Activated B cell treated with CpG ODN at 0.5 μM for 24 hours (primary cell): ENCODE measurements at regions of chr2 and their contacts with region 1.

Region 1: DNA sequence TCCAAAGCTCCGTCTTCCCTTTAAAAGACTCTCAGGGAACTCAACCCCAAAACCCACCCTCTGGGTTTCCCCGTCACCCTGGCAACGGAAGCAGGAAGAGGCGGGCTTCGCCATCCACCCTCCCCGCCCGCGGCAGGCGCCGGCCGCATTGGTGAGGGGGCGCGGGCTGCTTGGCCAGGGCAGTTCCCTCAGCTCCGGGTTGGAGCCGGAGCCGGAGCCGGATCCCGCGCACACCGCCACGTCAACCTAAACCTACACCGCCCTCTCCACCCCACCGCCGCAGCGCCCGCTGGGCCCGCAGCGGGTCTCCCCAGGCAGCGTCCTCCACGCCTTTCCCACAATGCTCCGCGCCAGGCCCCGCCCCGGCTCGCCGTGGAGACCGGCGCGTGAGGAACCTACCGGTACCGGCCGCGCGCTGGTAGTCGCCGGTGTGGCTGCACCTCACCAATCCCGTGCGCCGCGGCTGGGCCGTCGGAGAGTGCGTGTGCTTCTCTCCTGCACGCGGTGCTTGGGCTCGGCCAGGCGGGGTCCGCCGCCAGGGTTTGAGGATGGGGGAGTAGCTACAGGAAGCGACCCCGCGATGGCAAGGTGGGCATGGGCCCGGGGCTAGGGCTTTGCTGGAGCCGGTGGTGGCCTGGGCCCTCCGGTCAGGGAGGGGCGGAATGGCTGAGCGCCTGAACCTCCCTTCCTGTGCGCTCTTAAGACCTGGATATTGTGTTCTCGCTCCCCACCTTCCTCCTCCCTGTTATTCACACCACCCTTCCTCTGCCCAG is at the start of gene DNAJC10:
- DNase-seq: peak; percentile 94
- ATAC-seq: peak; percentile 78
- H3K4me3 Mint-ChIP-seq: no peak within 1 kb of the TSS
- H3K27ac Mint-ChIP-seq: no peak within 1 kb of the TSS
- H3K4me1 Mint-ChIP-seq: peaks cover 12% of the 10 kb centered on the region
- H3K27me3 Mint-ChIP-seq: no peaks in the 10 kb centered on the region
- CTCF ChIP-seq: no peak
- total RNA-seq, gene DNAJC10: 119 and 132 TPM in 2 replicates

Region 2: GRCh38 chr2:181991171-181991885 is 724.8 kb before region 1 on chr2:
- CTCF ChIA-PET with region 1: no interaction called
- POLR2A ChIA-PET with region 1: no interaction called
- intact Hi-C with region 1: loop called (anchors 5 kb)
- DNase-seq: no peak
- ATAC-seq: peak; percentile 91
- H3K4me3 Mint-ChIP-seq: peak overlapping the region; percentile 35
- H3K27ac Mint-ChIP-seq: peak overlapping the region; percentile 75
- H3K4me1 Mint-ChIP-seq: peaks cover 34% of the 10 kb centered on the region
- H3K27me3 Mint-ChIP-seq: no peaks in the 10 kb centered on the region
- CTCF ChIP-seq: no peak

Region 3: DNA sequence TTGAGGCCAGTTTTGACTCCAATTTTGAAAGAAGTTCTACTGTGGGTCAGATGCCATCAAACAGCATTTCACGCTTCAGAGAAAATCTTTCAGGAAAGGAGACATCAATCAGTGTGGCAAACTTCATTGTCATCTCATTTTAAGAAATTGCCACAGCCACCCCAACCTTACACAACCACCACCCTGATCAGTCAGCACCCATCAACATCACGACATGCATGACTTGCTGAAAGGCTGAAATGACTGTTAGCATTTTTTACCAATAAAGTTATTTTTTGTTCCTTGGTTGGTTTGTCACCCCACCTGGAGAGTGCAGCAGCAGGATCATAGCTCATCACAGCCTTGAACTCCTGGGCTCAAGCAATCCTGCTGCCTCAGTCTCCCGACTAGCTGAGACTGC is 10.4 kb after region 1 on chr2:
- CTCF ChIA-PET with region 1: no interaction called
- POLR2A ChIA-PET with region 1: interaction called, 12 read pairs
- intact Hi-C with region 1: loop called (anchors 1 kb)
- DNase-seq: no peak
- ATAC-seq: peak; percentile 18
- H3K4me3 Mint-ChIP-seq: no peak overlapping the region
- H3K27ac Mint-ChIP-seq: no peak overlapping the region
- H3K4me1 Mint-ChIP-seq: peaks cover 19% of the 10 kb centered on the region
- H3K27me3 Mint-ChIP-seq: no peaks in the 10 kb centered on the region
- CTCF ChIP-seq: no peak

Region 4: GRCh38 chr2:183078465-183079138 is 362.5 kb after region 1 on chr2 and contains the start of gene DUSP19:
- CTCF ChIA-PET with region 1: no interaction called
- POLR2A ChIA-PET with region 1: interaction called, 4 read pairs
- intact Hi-C with region 1: loop called (anchors 5 kb)
- DNase-seq: peak; percentile 61
- ATAC-seq: peak; percentile 90
- H3K4me3 Mint-ChIP-seq: peak within 1 kb of the TSS; percentile 93
- H3K27ac Mint-ChIP-seq: peak within 1 kb of the TSS; percentile 76
- H3K4me1 Mint-ChIP-seq: peaks cover 9% of the 10 kb centered on the region
- H3K27me3 Mint-ChIP-seq: peaks cover 6% of the 10 kb centered on the region
- CTCF ChIP-seq: no peak
- total RNA-seq, gene DUSP19: 0.31 and 0.49 TPM in 2 replicates